Activated naive CD4-positive, alpha-beta T cell treated with anti-CD3 and anti-CD28 coated beads, Interleukin-2, amount 10 ng/mL, durations not matched to agents 7 days and 5 days (primary cell): ENCODE measurements at regions of chr2 and their contacts with region 1.

Region 1: DNA sequence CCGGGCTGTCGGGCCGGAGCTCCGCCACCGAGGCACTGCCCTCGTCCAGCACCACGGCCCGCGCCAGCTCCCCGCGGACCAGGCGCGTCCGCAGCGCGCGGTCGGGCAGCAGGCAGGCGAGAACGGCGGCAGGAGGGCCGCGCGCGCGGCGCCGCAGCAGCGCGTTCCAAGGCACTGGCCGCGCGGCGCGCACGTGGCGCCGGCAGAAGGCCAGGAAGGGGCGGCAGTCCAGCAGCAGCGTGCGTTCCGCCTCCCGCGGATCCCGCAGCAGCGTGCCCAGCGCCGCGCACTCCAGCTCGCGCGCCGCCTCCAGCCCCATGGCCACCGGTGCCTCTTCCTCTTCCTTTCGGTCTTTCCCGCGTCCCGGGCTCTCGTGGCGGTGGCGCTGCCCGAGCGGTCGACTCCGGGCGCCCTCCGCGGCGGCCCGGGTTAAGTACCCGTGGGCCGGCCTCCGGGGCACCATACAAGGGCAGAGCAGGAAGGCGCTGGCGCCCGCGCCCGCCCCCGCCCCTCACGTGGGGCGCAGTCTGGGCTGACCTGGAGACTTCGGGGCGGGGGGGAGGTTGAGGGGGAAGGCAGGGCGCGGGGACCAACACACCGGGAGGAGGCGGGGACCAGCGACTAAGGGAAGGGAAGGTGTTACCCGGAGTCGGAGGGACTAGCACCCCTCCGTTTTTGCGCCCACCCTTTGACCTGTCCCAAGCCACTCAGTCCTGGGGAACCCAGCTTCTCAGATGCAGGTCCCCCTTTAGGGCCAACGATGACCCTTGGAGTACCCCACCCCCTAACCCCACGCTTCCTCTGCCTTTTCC is at the start of gene DUSP2:
- DNase-seq: peak; percentile 91
- H3K4me3 Mint-ChIP-seq: peak within 1 kb of the TSS; percentile 92
- H3K27ac Mint-ChIP-seq: peak within 1 kb of the TSS; percentile 98
- H3K4me1 Mint-ChIP-seq: peaks cover 69% of the 10 kb centered on the region
- H3K27me3 Mint-ChIP-seq: no peaks in the 10 kb centered on the region

Region 2: DNA sequence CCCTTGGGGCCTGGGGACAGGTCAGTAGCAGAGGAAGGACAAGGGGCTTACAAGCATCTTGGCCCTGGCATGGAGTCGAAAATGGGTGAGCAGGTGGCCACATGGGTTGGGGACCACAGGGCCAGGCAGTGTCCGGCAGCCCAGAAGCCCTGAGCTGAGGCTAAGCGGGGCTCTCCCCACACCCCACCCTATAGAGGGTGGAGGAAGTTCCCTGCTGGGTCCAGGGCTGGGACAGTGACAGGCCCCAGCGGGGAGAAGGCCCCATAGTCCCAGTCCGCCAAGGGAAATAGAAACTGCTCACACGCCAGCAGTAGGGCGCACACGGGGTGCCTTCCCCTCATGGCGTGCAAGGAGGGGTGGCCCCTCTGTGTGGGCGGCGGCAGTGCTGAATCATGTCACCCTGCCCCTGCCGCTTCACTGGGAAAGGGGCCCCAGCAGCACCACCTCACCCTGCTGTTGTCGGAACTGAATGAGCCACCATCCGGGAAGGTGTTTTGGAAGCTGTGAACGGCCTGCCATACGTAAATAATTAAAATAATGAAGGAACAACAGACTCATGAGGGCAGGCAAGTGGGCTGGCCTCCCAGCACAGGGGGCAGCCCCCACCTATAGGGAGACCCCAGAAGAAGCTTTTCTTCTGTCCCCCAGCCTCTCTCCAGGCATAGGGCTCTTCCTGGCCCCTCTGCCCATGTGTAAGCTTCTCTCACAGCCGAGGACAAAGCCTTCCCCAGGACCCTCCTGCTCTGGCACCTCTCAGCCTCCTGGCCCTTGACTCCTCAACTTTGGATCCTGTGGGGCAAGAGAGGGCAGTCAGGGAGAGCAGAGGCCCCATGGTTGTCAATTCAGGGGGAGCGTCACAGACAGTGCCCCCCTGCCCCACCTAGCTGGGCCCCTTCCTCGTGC is 12.7 kb after region 1 on chr2:
- CTCF ChIA-PET with region 1: interaction called, 19 read pairs
- DNase-seq: peak; percentile 82
- H3K4me3 Mint-ChIP-seq: peak overlapping the region; percentile 46
- H3K27ac Mint-ChIP-seq: peak overlapping the region; percentile 87
- H3K4me1 Mint-ChIP-seq: peaks cover 69% of the 10 kb centered on the region
- H3K27me3 Mint-ChIP-seq: no peaks in the 10 kb centered on the region

Region 3: GRCh38 chr2:96164459-96165184 is 19.4 kb after region 1 on chr2:
- CTCF ChIA-PET with region 1: interaction called, 19 read pairs
- DNase-seq: peak; percentile 76
- H3K4me3 Mint-ChIP-seq: peak overlapping the region; percentile 41
- H3K27ac Mint-ChIP-seq: peak overlapping the region; percentile 92
- H3K4me1 Mint-ChIP-seq: peaks cover 49% of the 10 kb centered on the region
- H3K27me3 Mint-ChIP-seq: no peaks in the 10 kb centered on the region

Region 4: GRCh38 chr2:96265840-96266679 is 120.8 kb after region 1 on chr2 and contains the starts of genes CIAO1 and TMEM127:
- CTCF ChIA-PET with region 1: interaction called, 18 read pairs
- DNase-seq: peak; percentile 99
- H3K4me3 Mint-ChIP-seq: peak within 1 kb of the TSS; percentile 91
- H3K27ac Mint-ChIP-seq: peak within 1 kb of the TSS; percentile 86
- H3K4me1 Mint-ChIP-seq: peaks cover 44% of the 10 kb centered on the region
- H3K27me3 Mint-ChIP-seq: no peaks in the 10 kb centered on the region